T-cell (primary cell): ENCODE measurements at regions of chr12 and their contacts with region 1.

Region 1: GRCh38 chr12:10235761-10236631 is 23.3 kb downstream of the GABARAPL1 start:
- DNase-seq: peak in 27 of 35 experiments; percentile 18 to 80 (median 39)
- ATAC-seq: peak in 1 of 4 experiments; percentile 73
- H3K4me3 ChIP-seq: no peak overlapping the region
- H3K4me3 Mint-ChIP-seq: no peak overlapping the region
- H3K27ac ChIP-seq: no peak overlapping the region
- H3K27ac Mint-ChIP-seq: peak overlapping the region in 1 of 2 donors; percentile 36
- H3K4me1 ChIP-seq: peaks cover 0 to 13% of the 10 kb centered on the region in 2 experiments
- H3K4me1 Mint-ChIP-seq: peaks cover 0 to 10% (median 4%) of the 10 kb centered on the region in 3 donors
- H3K27me3 ChIP-seq: no peaks in the 10 kb centered on the region
- H3K27me3 Mint-ChIP-seq: no peaks in the 10 kb centered on the region

Region 2: GRCh38 chr12:10341892-10342509 is 106.0 kb after region 1 on chr12:
- CTCF ChIA-PET with region 1: interaction called in 1 of 2 experiments, 11 read pairs
- POLR2A ChIA-PET with region 1: no interaction called
- DNase-seq: no peak
- ATAC-seq: no peak
- H3K4me3 ChIP-seq: no peak overlapping the region
- H3K4me3 Mint-ChIP-seq: no peak overlapping the region
- H3K27ac ChIP-seq: no peak overlapping the region
- H3K27ac Mint-ChIP-seq: no peak overlapping the region
- H3K4me1 ChIP-seq: no peaks in the 10 kb centered on the region
- H3K4me1 Mint-ChIP-seq: peaks cover 0 to 7% (median 0%) of the 10 kb centered on the region in 3 donors
- H3K27me3 ChIP-seq: no peaks in the 10 kb centered on the region
- H3K27me3 Mint-ChIP-seq: no peaks in the 10 kb centered on the region

Region 3: DNA sequence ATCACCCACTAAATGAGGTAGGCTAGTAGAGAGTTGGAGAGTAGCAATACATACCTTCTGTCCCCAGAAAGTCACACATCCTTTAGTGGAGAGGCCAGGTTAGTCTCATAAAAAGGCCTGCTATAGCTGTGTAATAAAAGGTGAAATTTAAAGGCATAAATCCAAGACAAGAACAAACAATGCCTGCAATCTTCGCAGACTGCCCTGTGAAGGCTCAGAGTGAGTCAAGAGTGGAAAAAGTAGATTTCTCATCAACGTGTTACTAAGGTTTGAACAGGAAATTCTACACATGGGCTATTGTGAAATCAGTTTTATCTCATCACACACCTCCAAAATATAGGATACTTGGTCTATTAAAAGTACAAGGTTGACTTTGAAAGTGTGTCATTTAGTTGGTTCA is 217.1 kb after region 1 on chr12 and contains the start of gene KLRC1:
- CTCF ChIA-PET with region 1: no interaction called
- POLR2A ChIA-PET with region 1: no interaction called
- DNase-seq: peak in 2 of 35 experiments; percentile 9 to 11
- ATAC-seq: peak in 1 of 4 experiments; percentile 19
- H3K4me3 ChIP-seq: no peak within 1 kb of the TSS
- H3K4me3 Mint-ChIP-seq: peak within 1 kb of the TSS in 2 of 3 donors; percentile 13 to 41
- H3K27ac ChIP-seq: no peak within 1 kb of the TSS
- H3K27ac Mint-ChIP-seq: no peak within 1 kb of the TSS
- H3K4me1 ChIP-seq: no peaks in the 10 kb centered on the region
- H3K4me1 Mint-ChIP-seq: no peaks in the 10 kb centered on the region
- H3K27me3 ChIP-seq: no peaks in the 10 kb centered on the region
- H3K27me3 Mint-ChIP-seq: no peaks in the 10 kb centered on the region
- total RNA-seq, gene KLRC1: 1.7 to 11.2 (median 2.9) TPM